Activated T-helper 2 cell treated with anti-CD3 and anti-CD28 coated beads, Interferon-gamma antibody, Interleukin-2, Interleukin-4, amounts not matched to agents 10 μg/mL and 5 μg/mL and 100 μg/mL, durations not matched to agents 14 hours and 24 hours and 36 hours (primary cell): ENCODE measurements at regions of chr2 and their contacts with region 1.

Region 1: GRCh38 chr2:73071360-73072133 is at the start of gene SFXN5:
- DNase-seq: peak; percentile 93
- H3K4me3 Mint-ChIP-seq: peak within 1 kb of the TSS; percentile 84
- H3K27ac Mint-ChIP-seq: peak within 1 kb of the TSS; percentile 81
- H3K4me1 Mint-ChIP-seq: peaks cover 20% of the 10 kb centered on the region
- H3K27me3 Mint-ChIP-seq: peaks cover 7% of the 10 kb centered on the region
- total RNA-seq, gene SFXN5: 18.4 and 18.5 TPM in 2 replicates

Region 2: GRCh38 chr2:72533765-72534164 is 537.8 kb before region 1 on chr2:
- intact Hi-C with region 1: no loop called
- DNase-seq: no peak
- H3K4me3 Mint-ChIP-seq: no peak overlapping the region
- H3K27ac Mint-ChIP-seq: no peak overlapping the region
- H3K4me1 Mint-ChIP-seq: no peaks in the 10 kb centered on the region
- H3K27me3 Mint-ChIP-seq: no peaks in the 10 kb centered on the region

Region 3: DNA sequence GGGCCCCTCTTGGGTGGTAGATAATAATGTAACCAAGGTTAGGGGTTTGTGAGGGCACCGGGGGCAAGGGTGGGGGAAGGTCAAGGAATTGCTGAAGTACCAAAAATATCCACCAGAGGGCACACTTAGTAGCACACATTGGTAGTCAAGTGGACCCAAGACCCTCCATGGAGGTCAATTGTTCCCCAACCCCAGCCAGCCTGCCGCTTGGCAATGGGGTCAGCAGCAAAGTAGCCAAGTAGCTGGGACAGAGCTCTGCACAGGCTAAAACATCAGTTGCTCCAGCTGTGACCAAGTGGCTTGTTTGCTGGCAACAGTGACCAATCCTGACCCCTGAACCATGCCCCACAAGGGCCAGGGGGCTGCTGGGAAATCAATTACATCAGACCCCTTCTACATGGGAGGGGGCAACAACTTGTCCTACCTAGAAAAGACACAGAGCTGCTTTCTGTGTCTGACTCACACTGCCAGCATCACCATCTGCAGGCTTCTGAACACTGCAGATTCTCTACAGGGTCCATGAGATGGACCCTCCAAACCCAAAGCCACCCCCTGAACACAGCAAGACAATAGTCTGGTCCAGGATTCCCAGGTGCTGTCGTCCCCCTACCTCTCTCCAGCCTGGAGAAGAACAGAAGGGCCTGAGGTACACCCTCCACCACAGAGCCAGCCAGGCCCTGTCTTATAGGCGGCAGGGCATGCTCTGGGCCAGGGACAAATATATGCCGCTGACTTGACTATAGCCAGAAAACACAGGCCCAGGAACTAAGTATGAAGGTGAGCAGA is 78.2 kb before region 1 on chr2:
- intact Hi-C with region 1: loop called (anchors 5 kb)
- DNase-seq: peak; percentile 21
- H3K4me3 Mint-ChIP-seq: no peak overlapping the region
- H3K27ac Mint-ChIP-seq: no peak overlapping the region
- H3K4me1 Mint-ChIP-seq: no peaks in the 10 kb centered on the region
- H3K27me3 Mint-ChIP-seq: no peaks in the 10 kb centered on the region

Region 4: GRCh38 chr2:73163483-73164367 is 92.2 kb after region 1 on chr2:
- intact Hi-C with region 1: no loop called
- DNase-seq: peak; percentile 33
- H3K4me3 Mint-ChIP-seq: no peak overlapping the region
- H3K27ac Mint-ChIP-seq: no peak overlapping the region
- H3K4me1 Mint-ChIP-seq: no peaks in the 10 kb centered on the region
- H3K27me3 Mint-ChIP-seq: peaks cover 7% of the 10 kb centered on the region

Region 5: GRCh38 chr2:73176881-73177644 is 105.5 kb after region 1 on chr2:
- intact Hi-C with region 1: loop called (anchors 1 kb)
- DNase-seq: peak; percentile 79
- H3K4me3 Mint-ChIP-seq: peak overlapping the region; percentile 81
- H3K27ac Mint-ChIP-seq: no peak overlapping the region
- H3K4me1 Mint-ChIP-seq: peaks cover 21% of the 10 kb centered on the region
- H3K27me3 Mint-ChIP-seq: peaks cover 56% of the 10 kb centered on the region

Region 6: GRCh38 chr2:73233154-73233931 is 161.8 kb after region 1 on chr2 and contains the start of gene PRADC1:
- intact Hi-C with region 1: loop called (anchors 2 kb)
- DNase-seq: peak; percentile 96
- H3K4me3 Mint-ChIP-seq: peak within 1 kb of the TSS; percentile 96
- H3K27ac Mint-ChIP-seq: peak within 1 kb of the TSS; percentile 92
- H3K4me1 Mint-ChIP-seq: peaks cover 31% of the 10 kb centered on the region
- H3K27me3 Mint-ChIP-seq: no peaks in the 10 kb centered on the region
- total RNA-seq, gene PRADC1: 10.5 and 11.4 TPM in 2 replicates

Region 7: DNA sequence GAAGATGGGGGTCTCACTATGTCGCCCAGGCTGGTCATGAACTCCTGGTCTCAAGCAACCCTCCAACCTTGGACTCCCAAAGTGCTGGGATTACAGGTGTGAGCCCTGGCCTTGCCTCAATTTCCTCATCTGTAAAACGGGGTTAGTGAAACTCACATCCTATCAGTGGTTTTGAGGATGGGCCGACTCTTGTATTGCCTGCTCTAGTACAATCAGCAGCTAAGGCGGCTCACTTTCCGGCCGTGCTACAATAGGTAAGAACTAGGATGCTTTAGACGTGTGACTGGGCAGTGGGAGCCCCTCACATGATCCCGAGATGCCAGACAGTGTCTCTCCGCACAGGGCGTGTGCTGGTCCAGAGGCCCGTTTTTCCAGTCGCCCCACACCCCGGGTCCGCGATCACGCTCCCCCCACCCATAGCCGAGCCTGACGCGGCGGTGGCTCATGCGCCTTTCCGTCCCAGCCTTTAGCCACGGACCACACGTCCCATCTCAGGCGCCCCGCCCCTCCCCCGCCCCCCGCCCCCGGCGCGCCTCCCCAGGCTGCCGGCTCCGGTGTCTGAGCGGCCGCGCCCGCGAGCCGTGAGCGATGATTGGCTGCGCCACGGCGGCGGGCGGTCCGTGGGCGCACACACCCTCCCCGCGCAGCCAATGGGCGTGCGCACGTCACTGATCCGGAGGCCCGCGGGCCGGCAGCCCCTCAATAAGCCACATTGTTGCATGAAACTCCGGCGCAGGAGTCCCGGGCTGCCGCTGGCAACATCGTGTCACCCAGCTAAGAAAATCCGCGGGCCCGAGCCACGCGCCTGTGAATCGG is 1762.1 kb after region 1 on chr2 and contains the start of gene HK2:
- intact Hi-C with region 1: loop called (anchors 5 kb)
- DNase-seq: peak; percentile 81
- H3K4me3 Mint-ChIP-seq: peak within 1 kb of the TSS; percentile 95
- H3K27ac Mint-ChIP-seq: peak within 1 kb of the TSS; percentile 93
- H3K4me1 Mint-ChIP-seq: peaks cover 45% of the 10 kb centered on the region
- H3K27me3 Mint-ChIP-seq: no peaks in the 10 kb centered on the region
- total RNA-seq, gene HK2: 102 TPM in 2 replicates